SK-N-SH (cell line): ENCODE measurements at regions of chr17 and their contacts with region 1.

Region 1: DNA sequence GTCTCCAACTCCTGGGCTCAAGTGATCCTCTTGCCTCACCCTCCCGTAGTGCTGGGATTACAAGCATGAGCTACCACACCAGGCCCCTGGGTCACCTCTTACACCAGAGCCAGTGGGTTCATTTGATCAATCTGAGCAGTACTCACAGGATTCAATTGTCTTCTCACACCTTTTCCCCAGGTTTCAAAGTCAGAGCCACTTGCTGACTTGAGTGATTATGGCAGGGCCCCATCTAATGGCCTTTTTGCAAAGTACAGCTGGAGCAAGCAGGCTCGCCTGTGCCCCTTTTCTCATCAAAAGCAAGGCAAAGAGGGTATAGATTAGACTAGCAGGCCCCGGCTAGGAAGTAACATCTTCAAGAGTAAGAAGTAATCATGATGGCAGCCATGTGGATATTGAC is 114.8 kb upstream of the NOL11 start:
- DNase-seq: peak; percentile 42
- H3K4me3 ChIP-seq: no peak overlapping the region
- H3K27ac ChIP-seq: no peak overlapping the region
- H3K4me1 ChIP-seq: peaks cover 24 to 33% of the 10 kb centered on the region in 2 experiments
- H3K27me3 ChIP-seq: no peaks in the 10 kb centered on the region
- CTCF ChIP-seq: peak; percentile 57
- EP300 ChIP-seq: no peak
- RAD21 ChIP-seq: peak; percentile 85

Region 2: DNA sequence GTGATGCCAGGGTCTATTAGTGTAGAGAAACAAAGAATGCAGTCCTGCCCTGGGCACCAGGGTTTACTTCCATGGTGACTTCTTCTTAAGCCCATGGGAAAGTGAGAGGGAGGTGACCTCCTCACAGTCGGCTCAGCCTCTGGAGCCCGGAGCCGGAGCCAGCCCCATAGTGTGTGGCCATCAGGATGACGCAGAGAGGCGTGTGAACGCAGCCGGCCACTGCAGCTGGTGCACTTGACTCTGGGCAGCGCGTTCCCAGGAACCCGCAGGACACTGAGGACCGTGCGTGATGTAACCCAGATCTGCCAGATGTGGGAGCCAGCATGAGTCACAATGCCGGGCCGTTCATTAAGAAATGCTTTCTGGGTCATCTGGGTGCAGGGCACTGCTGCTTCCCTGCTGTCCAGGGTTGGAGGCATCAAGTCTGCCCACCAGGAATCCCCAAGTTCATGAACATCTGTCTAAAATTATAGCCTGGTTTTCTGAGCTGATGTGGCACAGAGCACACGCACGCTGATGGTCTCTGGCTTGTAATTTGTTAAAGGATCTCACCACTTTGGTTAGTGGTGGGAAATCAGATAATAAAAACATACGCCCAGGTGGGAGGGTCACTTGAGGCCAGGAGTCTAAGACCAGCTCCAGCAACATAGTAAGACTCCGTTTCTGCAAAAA is 111.8 kb before region 1 on chr17:
- CTCF ChIA-PET with region 1: interaction called, 37 read pairs
- POLR2A ChIA-PET with region 1: interaction called, 17 read pairs
- DNase-seq: peak; percentile 89
- H3K4me3 ChIP-seq: peak overlapping the region; percentile 35 to 44
- H3K27ac ChIP-seq: peak overlapping the region; percentile 84 to 92
- H3K4me1 ChIP-seq: peaks cover 12 to 35% of the 10 kb centered on the region in 2 experiments
- H3K27me3 ChIP-seq: no peaks in the 10 kb centered on the region
- CTCF ChIP-seq: no peak
- EP300 ChIP-seq: peak; percentile 80 to 97; a peak in 3 of 4 replicates
- RAD21 ChIP-seq: peak; percentile 33

Region 3: DNA sequence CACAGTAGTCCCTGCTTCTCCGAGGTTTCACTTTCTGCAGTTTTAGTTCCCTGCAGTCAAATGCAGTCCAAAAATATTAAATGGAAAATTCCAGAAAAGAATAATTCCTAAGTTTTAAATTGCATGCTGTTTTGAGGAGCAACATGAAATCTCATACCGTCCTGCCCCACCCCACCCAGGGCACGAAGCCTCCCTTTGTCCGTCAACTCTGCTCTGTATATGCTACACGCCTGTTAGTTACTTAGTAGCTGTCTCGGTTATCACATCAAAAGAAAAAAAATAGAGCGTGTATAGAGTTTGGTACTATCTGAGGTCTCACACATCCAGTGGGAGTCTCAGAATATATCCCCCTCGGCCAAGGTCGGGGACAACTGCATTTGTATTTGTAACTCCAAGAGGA is 14.6 kb before region 1 on chr17:
- CTCF ChIA-PET with region 1: interaction called, 26 read pairs
- POLR2A ChIA-PET with region 1: interaction called, 4 read pairs
- DNase-seq: no peak
- H3K4me3 ChIP-seq: no peak overlapping the region
- H3K27ac ChIP-seq: peak overlapping the region in 1 of 2 experiments; percentile 36; a peak in 1 of 4 replicates
- H3K4me1 ChIP-seq: peaks cover 0 to 5% of the 10 kb centered on the region in 2 experiments; a peak in 1 of 4 replicates
- H3K27me3 ChIP-seq: no peaks in the 10 kb centered on the region
- CTCF ChIP-seq: no peak
- EP300 ChIP-seq: no peak
- RAD21 ChIP-seq: no peak